ENCODE measurements at regions of chr4 and their contacts with region 1.

Region 1: DNA sequence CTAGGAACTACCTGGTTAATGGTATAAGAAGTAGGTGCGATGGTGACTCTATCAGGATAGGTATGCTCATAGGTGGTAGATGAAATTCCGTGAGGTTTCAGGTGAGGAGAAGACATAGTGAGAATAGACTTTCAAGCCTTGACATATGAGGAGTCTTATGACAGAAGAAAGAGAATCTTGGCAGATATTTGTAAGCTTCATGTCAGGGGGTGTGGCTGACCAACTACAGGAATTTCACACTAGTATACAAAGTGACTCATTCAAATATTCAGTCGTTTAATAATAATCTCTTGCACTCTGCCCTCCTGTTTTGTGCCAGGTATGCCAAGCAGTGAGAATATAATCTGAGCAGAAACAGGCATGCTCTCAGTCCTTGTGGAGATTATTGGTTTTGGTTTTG is 22.8 kb downstream of the PACRGL start:
- DNase-seq: no peak
- H3K4me3 ChIP-seq: no peak overlapping the region
- H3K27ac ChIP-seq: no peak overlapping the region
- H3K4me1 ChIP-seq: no peaks in the 10 kb centered on the region
- H3K27me3 ChIP-seq: no peaks in the 10 kb centered on the region
- CTCF ChIP-seq: no peak

Region 2: GRCh38 chr4:20684852-20685763 is 37.9 kb before region 1 on chr4:
- CTCF ChIA-PET with region 1: no interaction called
- POLR2A ChIA-PET with region 1: no interaction called
- intact Hi-C with region 1: no loop called
- DNase-seq: no peak
- H3K4me3 ChIP-seq: no peak overlapping the region
- H3K27ac ChIP-seq: no peak overlapping the region
- H3K4me1 ChIP-seq: no peaks in the 10 kb centered on the region
- H3K27me3 ChIP-seq: no peaks in the 10 kb centered on the region
- CTCF ChIP-seq: peak; percentile 70

Region 3: GRCh38 chr4:20938204-20938603 is 215.2 kb after region 1 on chr4:
- CTCF ChIA-PET with region 1: no interaction called
- POLR2A ChIA-PET with region 1: interaction called, 18 read pairs
- intact Hi-C with region 1: no loop called
- DNase-seq: no peak
- H3K4me3 ChIP-seq: no peak overlapping the region
- H3K27ac ChIP-seq: no peak overlapping the region
- H3K4me1 ChIP-seq: no peaks in the 10 kb centered on the region
- H3K27me3 ChIP-seq: no peaks in the 10 kb centered on the region
- CTCF ChIP-seq: no peak